HEK293T (cell line): ENCODE measurements at regions of chr4 and their contacts with region 1.

Region 1: GRCh38 chr4:37452952-37453280 is 208.4 kb downstream of the NWD2 start:
- DNase-seq: peak; percentile 29

Region 2: GRCh38 chr4:37510626-37511025 is 57.7 kb after region 1 on chr4:
- CTCF ChIA-PET with region 1: no interaction called
- POLR2A ChIA-PET with region 1: no interaction called
- DNase-seq: no peak

Region 3: GRCh38 chr4:37567841-37568240 is 114.9 kb after region 1 on chr4:
- CTCF ChIA-PET with region 1: interaction called, 25 read pairs
- POLR2A ChIA-PET with region 1: interaction called, 4 read pairs
- DNase-seq: no peak